Calu3 (cell line): ENCODE measurements at regions of chr20 and their contacts with region 1.

Region 1: GRCh38 chr20:8131598-8132483 is at the start of gene PLCB1:
- DNase-seq: peak; percentile 77
- H3K4me3 Mint-ChIP-seq: peak within 1 kb of the TSS; percentile 68
- H3K27ac Mint-ChIP-seq: no peak within 1 kb of the TSS
- H3K4me1 Mint-ChIP-seq: no peaks in the 10 kb centered on the region
- H3K27me3 Mint-ChIP-seq: peaks cover 61% of the 10 kb centered on the region
- CTCF ChIP-seq: peak; percentile 71
- total RNA-seq, gene PLCB1: 6.0 and 7.6 TPM in 2 replicates

Region 2: GRCh38 chr20:8043687-8044282 is 88.1 kb before region 1 on chr20:
- CTCF ChIA-PET with region 1: no interaction called
- intact Hi-C with region 1: loop called (anchors 10 kb)
- DNase-seq: peak; percentile 34
- H3K4me3 Mint-ChIP-seq: no peak overlapping the region
- H3K27ac Mint-ChIP-seq: no peak overlapping the region
- H3K4me1 Mint-ChIP-seq: peaks cover 7% of the 10 kb centered on the region
- H3K27me3 Mint-ChIP-seq: peaks cover 11% of the 10 kb centered on the region
- CTCF ChIP-seq: peak; percentile 50

Region 3: GRCh38 chr20:8305449-8305978 is 173.7 kb after region 1 on chr20:
- CTCF ChIA-PET with region 1: no interaction called
- intact Hi-C with region 1: loop called (anchors 2 kb)
- DNase-seq: peak; percentile 47
- H3K4me3 Mint-ChIP-seq: no peak overlapping the region
- H3K27ac Mint-ChIP-seq: no peak overlapping the region
- H3K4me1 Mint-ChIP-seq: no peaks in the 10 kb centered on the region
- H3K27me3 Mint-ChIP-seq: no peaks in the 10 kb centered on the region
- CTCF ChIP-seq: peak; percentile 53

Region 4: GRCh38 chr20:8389381-8390036 is 257.7 kb after region 1 on chr20:
- CTCF ChIA-PET with region 1: interaction called, 4 read pairs
- intact Hi-C with region 1: loop called (anchors 2 kb)
- DNase-seq: no peak
- H3K4me3 Mint-ChIP-seq: no peak overlapping the region
- H3K27ac Mint-ChIP-seq: no peak overlapping the region
- H3K4me1 Mint-ChIP-seq: no peaks in the 10 kb centered on the region
- H3K27me3 Mint-ChIP-seq: no peaks in the 10 kb centered on the region
- CTCF ChIP-seq: no peak

Region 5: GRCh38 chr20:8535403-8536261 is 403.8 kb after region 1 on chr20:
- CTCF ChIA-PET with region 1: no interaction called
- intact Hi-C with region 1: loop called (anchors 5 kb)
- DNase-seq: peak; percentile 26
- H3K4me3 Mint-ChIP-seq: no peak overlapping the region
- H3K27ac Mint-ChIP-seq: no peak overlapping the region
- H3K4me1 Mint-ChIP-seq: no peaks in the 10 kb centered on the region
- H3K27me3 Mint-ChIP-seq: peaks cover 18% of the 10 kb centered on the region
- CTCF ChIP-seq: peak; percentile 51